ENCODE measurements at regions of chr12 and their contacts with region 1.

Region 1: DNA sequence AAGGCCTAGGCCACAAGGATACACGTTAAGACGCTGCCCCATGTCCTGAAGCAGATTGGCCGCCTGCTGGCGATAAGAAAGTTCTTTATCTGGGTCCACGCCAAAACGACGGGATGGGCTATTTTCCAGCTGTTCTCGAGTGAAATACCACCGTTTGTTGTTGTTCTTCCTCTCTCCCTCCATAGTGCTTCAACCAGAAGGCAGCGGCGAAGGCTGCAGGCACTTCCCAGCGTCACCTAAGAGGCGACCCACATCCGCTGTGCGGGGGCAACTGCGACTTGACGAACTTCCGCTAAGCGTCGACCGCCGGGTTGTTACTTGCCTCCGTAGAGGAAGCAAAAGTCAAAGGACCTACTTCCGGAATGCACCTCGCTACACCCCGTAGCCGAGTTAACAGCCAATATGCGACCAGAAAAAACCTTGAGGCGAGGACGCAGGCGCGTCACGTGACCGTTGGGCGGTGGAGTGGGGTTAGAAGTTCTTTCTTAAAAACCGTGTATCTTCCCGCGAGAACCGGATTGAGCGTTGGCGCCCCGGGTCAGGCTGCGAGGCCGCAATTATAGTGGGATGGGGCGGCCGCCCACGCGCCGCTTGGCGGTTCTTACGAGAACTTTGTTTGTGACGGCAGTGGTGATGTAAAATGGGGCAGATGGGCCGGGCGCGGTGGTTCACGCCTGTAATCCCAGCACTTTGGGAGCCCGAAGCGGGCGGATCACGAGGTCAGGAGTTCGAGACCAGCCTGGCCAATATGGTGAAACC is at the start of gene CCNT1:
- DNase-seq: peak; percentile 99
- ATAC-seq: peak; percentile 99
- total RNA-seq, gene CCNT1: 17.0 TPM

Region 2: GRCh38 chr12:48681738-48682532 is 34.7 kb before region 1 on chr12 and contains the start of gene KANSL2:
- intact Hi-C with region 1: loop called (anchors 2 kb)
- DNase-seq: peak; percentile 99
- ATAC-seq: peak; percentile 99
- total RNA-seq, gene KANSL2: 19.7 TPM

Region 3: DNA sequence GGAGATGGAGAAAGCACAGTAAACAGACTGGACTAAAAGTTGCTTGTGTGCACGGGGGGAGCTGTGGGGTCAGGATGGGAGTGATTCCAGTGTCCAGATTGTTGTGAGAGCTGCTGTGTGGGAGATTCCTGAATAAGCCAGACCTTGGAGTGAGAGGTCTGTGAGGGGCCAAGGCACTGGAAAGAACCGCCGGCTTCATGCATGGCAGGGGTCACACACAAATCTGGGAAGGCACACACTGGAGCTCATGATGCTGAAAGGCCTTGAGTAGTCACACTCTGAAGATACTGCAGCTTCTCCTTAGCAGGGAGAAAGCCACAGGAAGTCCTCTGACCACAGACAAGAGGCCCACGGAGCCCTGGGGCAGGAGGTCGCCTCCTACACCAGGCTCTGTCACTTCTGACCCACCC is 49.1 kb after region 1 on chr12:
- intact Hi-C with region 1: no loop called
- DNase-seq: no peak
- ATAC-seq: no peak

Measured in Right ventricle myocardium inferior (tissue), 1 donor.